ENCODE measurements at regions of chr12 and their contacts with region 1.

Region 1: DNA sequence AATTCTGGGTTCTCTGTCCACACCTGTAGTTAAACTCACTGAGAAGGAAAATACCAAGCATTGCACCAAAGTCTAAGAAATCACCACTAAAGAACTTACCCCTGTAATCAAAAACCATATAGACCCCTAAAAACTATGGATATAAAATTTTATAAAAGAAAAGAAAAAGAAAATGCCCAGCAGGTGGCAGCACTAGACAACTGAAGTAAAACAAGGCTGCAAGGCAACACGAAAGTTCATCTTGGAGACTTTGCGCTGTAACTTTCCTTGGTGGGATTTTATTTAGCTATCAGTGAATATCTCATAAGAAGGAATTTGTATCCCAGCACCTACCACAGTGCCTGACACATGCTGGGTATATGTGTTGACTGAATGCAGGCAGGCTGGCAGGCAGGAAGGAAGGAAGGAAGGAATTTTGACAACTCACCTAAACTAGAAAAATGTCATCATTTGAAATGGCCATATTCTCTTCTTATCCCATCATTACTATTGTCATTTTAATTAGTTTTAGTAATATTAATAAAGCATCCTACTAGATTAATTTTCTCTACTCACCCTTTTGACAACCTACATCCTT is 68.2 kb upstream of the ETV6 start:
- DNase-seq: peak; percentile 18
- H3K4me3 ChIP-seq: no peak overlapping the region
- H3K27ac ChIP-seq: no peak overlapping the region
- H3K4me1 ChIP-seq: no peaks in the 10 kb centered on the region
- H3K27me3 ChIP-seq: peaks cover 17% of the 10 kb centered on the region
- CTCF ChIP-seq: peak; percentile 73

Region 2: GRCh38 chr12:12032851-12033588 is 451.8 kb after region 1 on chr12:
- intact Hi-C with region 1: loop called (anchors 2 kb)
- DNase-seq: peak; percentile 72
- H3K4me3 ChIP-seq: peak overlapping the region; percentile 63
- H3K27ac ChIP-seq: peak overlapping the region; percentile 69
- H3K4me1 ChIP-seq: peaks cover 9% of the 10 kb centered on the region
- H3K27me3 ChIP-seq: peaks cover 2% of the 10 kb centered on the region
- CTCF ChIP-seq: peak; percentile 87

Measured in left ventricle myocardium inferior (tissue), 1 donor.